Activated CD8-positive, alpha-beta T cell treated with anti-CD3 and anti-CD28 coated beads, Interleukin-2, amount 10 ng/mL, durations not matched to agents 7 days and 5 days (primary cell): ENCODE measurements at regions of chr20 and their contacts with region 1.

Region 1: DNA sequence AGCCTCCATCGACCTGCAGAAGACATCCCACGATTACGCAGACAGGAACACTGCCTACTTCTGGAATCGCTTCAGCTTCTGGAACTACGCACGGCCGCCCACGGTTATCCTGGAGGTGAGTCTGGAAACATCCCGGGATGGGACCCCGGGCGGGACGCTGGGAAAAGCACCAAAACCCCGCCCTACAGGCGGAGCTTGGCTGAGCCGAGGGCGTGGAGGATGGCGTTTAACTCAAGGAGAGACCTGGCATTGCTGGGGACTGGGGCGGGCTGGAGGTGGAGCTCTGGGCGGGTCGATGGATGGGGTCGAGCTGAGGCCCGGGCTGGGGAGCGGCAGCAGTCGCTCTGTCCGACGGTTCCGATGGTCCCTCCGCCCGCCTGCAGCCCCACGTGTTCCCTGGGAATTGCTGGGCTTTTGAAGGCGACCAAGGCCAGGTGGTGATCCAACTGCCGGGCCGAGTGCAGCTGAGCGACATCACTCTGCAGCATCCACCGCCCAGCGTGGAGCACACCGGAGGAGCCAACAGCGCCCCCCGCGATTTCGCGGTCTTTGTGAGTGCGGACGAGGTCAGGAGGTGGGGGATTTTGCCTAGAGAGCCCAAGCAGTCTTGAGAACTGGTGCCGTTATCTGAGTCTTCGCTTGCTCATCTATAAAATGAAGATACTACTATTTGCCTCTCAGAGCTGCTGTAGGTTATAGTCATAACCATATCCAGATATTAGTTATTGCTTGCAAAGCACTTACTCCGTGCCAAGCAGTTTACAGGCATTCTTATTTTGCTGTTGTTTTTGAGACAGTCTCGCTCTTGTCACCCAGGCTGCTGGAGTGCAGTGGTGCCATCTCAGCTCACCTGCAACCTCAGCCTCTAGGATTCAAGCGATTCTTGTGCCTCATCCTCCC is 3.8 kb downstream of the SPAG4 start:
- DNase-seq: peak; percentile 83
- ATAC-seq: peak; percentile 41
- H3K4me3 Mint-ChIP-seq: peak overlapping the region; percentile 84
- H3K27ac Mint-ChIP-seq: peak overlapping the region; percentile 81
- H3K4me1 Mint-ChIP-seq: peaks cover 37% of the 10 kb centered on the region
- H3K27me3 Mint-ChIP-seq: peaks cover 1% of the 10 kb centered on the region

Region 2: GRCh38 chr20:35454881-35455609 is 164.4 kb before region 1 on chr20 and contains the start of gene CEP250:
- CTCF ChIA-PET with region 1: interaction called, 10 read pairs
- POLR2A ChIA-PET with region 1: interaction called, 5 read pairs
- DNase-seq: peak; percentile 96
- ATAC-seq: peak; percentile 98
- H3K4me3 Mint-ChIP-seq: peak within 1 kb of the TSS; percentile 89
- H3K27ac Mint-ChIP-seq: peak within 1 kb of the TSS; percentile 98
- H3K4me1 Mint-ChIP-seq: peaks cover 33% of the 10 kb centered on the region
- H3K27me3 Mint-ChIP-seq: no peaks in the 10 kb centered on the region
- total RNA-seq, gene CEP250: 72.1 to 74.5 TPM

Region 3: GRCh38 chr20:35601008-35601973 is 18.2 kb before region 1 on chr20:
- CTCF ChIA-PET with region 1: interaction called, 43 read pairs
- POLR2A ChIA-PET with region 1: interaction called, 11 read pairs
- DNase-seq: peak; percentile 82
- ATAC-seq: peak; percentile 93
- H3K4me3 Mint-ChIP-seq: peak overlapping the region; percentile 67
- H3K27ac Mint-ChIP-seq: peak overlapping the region; percentile 30
- H3K4me1 Mint-ChIP-seq: peaks cover 10% of the 10 kb centered on the region
- H3K27me3 Mint-ChIP-seq: peaks cover 60% of the 10 kb centered on the region

Region 4: DNA sequence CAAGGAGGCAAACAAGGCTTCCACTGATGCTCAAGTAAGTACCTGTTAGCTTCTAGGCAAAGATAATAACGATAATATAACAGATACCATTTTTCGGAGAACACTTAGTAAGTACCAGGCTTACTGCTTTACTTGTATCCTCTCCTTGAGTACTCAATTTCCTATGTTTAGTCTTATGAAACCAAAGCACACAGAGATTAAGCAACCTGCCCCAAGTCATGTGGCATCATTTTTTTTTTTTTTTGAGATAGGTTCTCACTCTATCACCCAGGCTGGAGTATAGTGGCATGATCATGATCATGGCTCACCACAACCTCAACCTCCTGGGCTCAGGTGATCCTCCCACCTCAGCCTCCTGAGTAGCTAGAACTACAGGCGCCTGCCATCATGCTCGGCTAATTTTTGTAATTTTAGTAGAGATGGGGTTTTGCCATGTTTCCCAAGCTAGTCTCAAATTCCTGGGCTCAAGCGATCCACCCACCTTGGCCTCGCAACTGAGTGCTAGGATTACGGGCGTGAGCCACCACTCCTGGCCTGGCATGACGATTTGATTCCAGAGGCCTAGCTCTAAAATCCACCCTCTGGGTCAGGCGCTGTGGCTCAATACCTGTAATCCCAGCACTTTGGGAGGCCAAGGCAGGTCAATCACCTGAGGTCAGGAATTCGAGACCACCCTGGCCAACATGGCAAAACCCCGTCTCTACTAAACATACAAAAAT is 10.1 kb after region 1 on chr20:
- CTCF ChIA-PET with region 1: interaction called, 24 read pairs
- POLR2A ChIA-PET with region 1: interaction called, 10 read pairs
- DNase-seq: no peak
- ATAC-seq: no peak
- H3K4me3 Mint-ChIP-seq: no peak overlapping the region
- H3K27ac Mint-ChIP-seq: no peak overlapping the region
- H3K4me1 Mint-ChIP-seq: no peaks in the 10 kb centered on the region
- H3K27me3 Mint-ChIP-seq: no peaks in the 10 kb centered on the region

Region 5: DNA sequence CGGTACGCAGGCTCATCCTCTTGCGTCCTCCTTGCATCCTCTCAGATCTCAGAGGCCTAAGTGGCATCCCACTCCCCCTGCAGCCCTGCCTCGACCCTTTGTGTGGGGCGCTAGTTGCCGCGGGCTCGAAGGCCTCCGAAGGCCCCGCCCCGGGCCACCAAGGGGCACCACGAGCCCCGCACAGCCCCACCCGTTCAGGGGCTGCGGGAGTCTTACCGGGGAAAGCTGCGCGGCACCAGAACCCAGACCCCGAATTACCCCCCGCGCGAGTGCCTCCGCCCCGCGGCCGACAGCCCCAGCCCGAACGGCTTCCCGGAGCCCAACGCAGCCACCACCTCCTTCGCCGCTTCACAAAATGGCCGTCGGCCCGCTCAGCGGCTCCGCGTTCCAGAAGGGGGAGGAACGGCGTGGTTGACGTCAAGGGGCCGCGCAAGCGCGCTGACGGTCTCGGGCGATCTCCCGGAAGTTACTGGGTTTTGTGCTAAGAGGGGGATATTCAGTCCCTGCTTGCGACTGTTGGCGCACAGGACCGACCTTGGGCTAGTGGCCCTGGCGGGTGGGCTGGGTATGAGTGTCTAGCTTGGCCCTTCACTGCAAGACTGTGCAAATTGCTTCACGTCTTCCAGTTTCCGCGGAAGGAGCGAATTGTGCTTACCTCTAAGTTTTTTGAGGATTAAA is 45.2 kb after region 1 on chr20 and contains the starts of genes CPNE1 and RBM12:
- CTCF ChIA-PET with region 1: interaction called, 29 read pairs
- POLR2A ChIA-PET with region 1: interaction called, 72 read pairs
- DNase-seq: peak; percentile 96
- ATAC-seq: peak; percentile 80
- H3K4me3 Mint-ChIP-seq: peak within 1 kb of the TSS; percentile 96
- H3K27ac Mint-ChIP-seq: peak within 1 kb of the TSS; percentile 99
- H3K4me1 Mint-ChIP-seq: peaks cover 38% of the 10 kb centered on the region
- H3K27me3 Mint-ChIP-seq: no peaks in the 10 kb centered on the region
- total RNA-seq, gene CPNE1: 271 to 272 TPM
- total RNA-seq, gene RBM12: 112 to 119 TPM